GM18951 (cell line): ENCODE measurements at regions of chr14 and their contacts with region 1.

Region 1: DNA sequence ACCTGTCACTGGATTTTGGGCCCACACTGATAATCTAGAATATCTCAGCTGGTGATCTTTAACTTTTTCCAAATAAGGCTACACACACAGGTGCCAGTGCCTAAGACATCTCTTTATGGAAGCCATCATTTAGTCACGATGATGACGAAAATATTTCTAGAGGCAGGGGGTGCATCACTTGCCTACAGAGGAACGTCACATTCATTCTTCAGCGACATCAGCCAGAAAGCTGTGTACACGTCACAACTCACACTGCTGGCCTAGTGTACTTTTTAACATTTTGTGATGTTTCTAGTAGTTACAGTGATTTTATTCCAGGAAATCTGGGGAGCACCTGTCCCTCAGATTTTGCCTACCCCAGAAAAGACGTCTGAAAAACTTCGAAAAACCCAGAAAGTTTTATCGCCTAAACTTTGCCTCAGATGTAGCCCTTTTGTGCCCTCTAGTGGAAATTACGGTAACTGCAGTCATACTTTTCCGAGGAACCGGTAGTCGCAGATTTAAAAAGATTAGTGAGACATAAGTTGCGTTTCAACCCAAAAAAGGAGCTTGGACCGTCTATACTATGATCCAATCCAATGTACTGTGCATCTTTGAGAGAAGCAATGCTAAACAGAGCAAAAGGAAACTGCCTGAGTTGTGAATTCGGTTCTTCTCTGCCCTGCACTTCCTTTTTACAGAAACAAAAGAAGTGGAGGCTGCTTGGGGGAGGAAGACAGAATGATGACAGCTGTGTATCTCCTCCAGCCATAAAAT is 64.3 kb upstream of the STON2 start:
- POLR2A ChIP-seq: no peak

Region 2: DNA sequence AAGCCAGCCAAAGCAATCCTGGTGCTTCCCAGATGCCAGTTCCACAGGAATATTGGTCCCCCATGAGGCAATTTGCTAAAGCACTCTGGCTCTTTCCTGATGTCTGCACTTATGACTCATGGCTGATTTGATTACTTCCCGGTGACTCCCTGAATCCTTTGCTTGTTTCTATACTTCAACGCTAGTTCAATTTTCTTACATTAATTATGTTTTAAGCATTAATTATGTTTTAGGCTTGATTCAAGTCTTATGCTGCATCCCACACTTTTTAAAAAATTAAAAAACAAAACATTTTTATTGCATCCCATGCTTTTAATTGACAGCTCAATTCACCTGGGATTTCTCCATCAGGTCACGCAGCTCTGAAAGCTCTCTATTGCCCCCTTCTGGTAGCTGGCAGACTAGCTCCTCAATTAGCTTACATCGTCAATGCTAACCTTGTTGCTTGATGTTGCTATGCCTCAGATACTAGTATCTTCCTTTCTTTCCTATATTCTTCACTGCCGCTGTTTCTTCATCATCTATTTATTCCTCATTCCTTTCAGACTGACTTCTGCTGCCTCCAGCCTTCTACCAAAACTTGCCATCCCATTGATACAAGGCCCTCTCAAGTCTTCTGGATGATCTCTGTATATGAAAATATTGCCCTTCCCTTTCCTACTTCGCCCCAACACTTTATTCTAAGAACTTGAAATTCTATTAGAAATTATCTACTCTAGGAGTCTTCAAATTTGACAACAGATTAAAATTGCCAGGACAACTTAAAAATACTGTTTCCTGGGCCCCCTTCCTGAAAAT is 477.0 kb before region 1 on chr14:
- in situ Hi-C with region 1: loop called (anchors 25 kb)
- POLR2A ChIP-seq: no peak

Region 3: GRCh38 chr14:81276073-81277069 is 188.1 kb before region 1 on chr14:
- in situ Hi-C with region 1: loop called (anchors 5 kb)
- POLR2A ChIP-seq: no peak